A673 (cell line): ENCODE measurements at regions of chr12 and their contacts with region 1.

Region 1: DNA sequence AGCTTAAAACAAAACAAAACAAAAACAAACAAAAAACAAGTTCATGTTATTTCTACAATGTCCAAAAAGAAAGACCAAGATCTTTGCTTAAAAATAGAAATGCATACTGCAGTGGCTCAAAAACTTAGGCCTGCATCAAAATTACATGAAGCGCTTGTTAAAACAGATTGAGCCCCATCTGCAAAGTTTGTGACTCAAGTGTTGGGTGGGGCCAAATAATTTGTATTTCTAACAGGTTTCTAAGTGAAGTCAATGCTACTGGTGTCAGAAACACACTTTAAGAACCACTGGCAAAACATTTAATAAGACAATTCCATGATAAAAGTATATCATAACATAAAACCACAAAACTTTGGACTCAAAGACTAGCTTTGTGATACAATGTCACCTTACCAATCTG is 105.6 kb downstream of the PAWR start:
- DNase-seq: no peak
- H3K4me3 ChIP-seq: no peak overlapping the region
- H3K27ac ChIP-seq: no peak overlapping the region
- H3K4me1 ChIP-seq: no peaks in the 10 kb centered on the region
- H3K27me3 ChIP-seq: no peaks in the 10 kb centered on the region
- CTCF ChIP-seq: no peak

Region 2: DNA sequence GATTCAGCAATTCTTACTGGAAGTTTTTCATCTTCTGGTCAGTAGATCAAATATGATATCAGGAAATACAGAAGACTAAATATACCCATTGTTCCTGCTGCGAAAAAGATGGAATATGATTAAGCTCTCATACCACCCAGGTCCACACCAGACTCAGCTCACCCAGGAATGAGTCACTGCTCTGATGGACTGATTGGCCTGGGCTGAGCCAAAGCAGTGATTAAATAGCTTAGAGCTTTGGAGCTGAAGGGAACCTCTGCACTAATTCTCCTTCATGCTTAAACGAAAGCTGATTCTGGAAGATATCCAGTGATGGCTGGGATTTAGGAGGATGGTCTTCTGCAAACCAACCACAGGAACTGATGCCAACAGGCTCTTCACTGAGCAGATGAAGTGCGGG is 782.6 kb before region 1 on chr12:
- CTCF ChIA-PET with region 1: no interaction called
- POLR2A ChIA-PET with region 1: no interaction called
- intact Hi-C with region 1: no loop called
- DNase-seq: peak; percentile 66
- H3K4me3 ChIP-seq: no peak overlapping the region
- H3K27ac ChIP-seq: no peak overlapping the region
- H3K4me1 ChIP-seq: no peaks in the 10 kb centered on the region
- H3K27me3 ChIP-seq: no peaks in the 10 kb centered on the region
- CTCF ChIP-seq: no peak

Region 3: DNA sequence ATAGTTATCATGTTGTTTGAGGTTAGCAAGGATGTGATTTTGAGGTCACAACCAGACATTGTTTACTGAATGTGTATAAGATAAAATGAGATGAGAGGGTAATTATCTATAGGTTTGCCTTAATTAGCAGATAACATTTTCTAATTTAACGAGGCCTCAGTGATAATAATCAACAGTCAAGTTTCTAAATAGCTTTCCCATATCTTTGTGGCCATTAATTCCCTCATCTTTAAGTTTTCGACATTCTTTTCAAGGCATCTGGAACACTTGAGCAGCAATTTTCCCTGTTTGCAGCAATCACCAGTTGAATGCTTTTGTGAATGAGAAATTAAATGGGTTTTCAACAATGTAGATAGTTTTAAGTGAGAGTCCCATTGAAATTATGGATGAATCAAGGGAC is 416.5 kb before region 1 on chr12:
- CTCF ChIA-PET with region 1: no interaction called
- POLR2A ChIA-PET with region 1: no interaction called
- intact Hi-C with region 1: no loop called
- DNase-seq: peak; percentile 42
- H3K4me3 ChIP-seq: no peak overlapping the region
- H3K27ac ChIP-seq: no peak overlapping the region
- H3K4me1 ChIP-seq: peaks cover 8% of the 10 kb centered on the region
- H3K27me3 ChIP-seq: no peaks in the 10 kb centered on the region
- CTCF ChIP-seq: no peak

Region 4: DNA sequence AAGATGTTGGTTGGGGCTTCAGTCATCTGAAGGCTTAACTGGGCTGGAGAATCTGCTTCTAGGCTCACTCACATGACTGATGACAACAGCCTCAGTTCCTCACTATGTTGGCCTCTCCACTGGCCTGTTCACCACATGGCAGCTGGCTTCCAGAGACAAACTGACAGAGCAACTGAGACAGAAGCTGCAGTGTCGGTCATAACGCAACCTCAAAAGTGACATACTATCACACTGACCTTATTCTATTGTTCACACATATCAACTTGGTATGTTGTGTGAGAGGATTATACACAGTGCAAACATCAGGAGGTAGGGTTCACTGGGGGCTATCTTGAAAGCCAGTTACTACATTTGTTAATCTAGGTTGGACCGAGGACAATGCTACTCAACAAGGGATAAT is 12.8 kb after region 1 on chr12:
- CTCF ChIA-PET with region 1: no interaction called
- POLR2A ChIA-PET with region 1: interaction called, 13 read pairs
- intact Hi-C with region 1: no loop called
- DNase-seq: no peak
- H3K4me3 ChIP-seq: no peak overlapping the region
- H3K27ac ChIP-seq: no peak overlapping the region
- H3K4me1 ChIP-seq: no peaks in the 10 kb centered on the region
- H3K27me3 ChIP-seq: no peaks in the 10 kb centered on the region
- CTCF ChIP-seq: no peak